A549 (cell line): ENCODE measurements at regions of chr15 and their contacts with region 1.

Region 1: GRCh38 chr15:91271565-91272153 is 171.6 kb downstream of the SV2B start:
- DNase-seq: peak; percentile 51 to 76
- ATAC-seq: peak; percentile 86 to 90; a peak in 5 of 6 replicates
- H3K4me3 ChIP-seq: no peak overlapping the region
- H3K27ac ChIP-seq: no peak overlapping the region
- H3K4me1 ChIP-seq: no peaks in the 10 kb centered on the region
- CTCF ChIP-seq: peak; percentile 97
- EP300 ChIP-seq: no peak
- POLR2A ChIP-seq: no peak
- RAD21 ChIP-seq: peak; percentile 95 to 96

Region 2: GRCh38 chr15:90902040-90902839 is 369.4 kb before region 1 on chr15:
- CTCF ChIA-PET with region 1: interaction called, 11 read pairs
- POLR2A ChIA-PET with region 1: interaction called, 3 read pairs
- DNase-seq: peak; percentile 88 to 99
- ATAC-seq: peak; percentile 88 to 94
- H3K4me3 ChIP-seq: peak overlapping the region; percentile 81
- H3K27ac ChIP-seq: peak overlapping the region; percentile 88
- H3K4me1 ChIP-seq: peaks cover 14% of the 10 kb centered on the region
- CTCF ChIP-seq: peak; percentile 90
- EP300 ChIP-seq: no peak
- POLR2A ChIP-seq: peak; percentile 91
- RAD21 ChIP-seq: peak; percentile 25 to 59; a peak in 4 of 5 replicates

Region 3: DNA sequence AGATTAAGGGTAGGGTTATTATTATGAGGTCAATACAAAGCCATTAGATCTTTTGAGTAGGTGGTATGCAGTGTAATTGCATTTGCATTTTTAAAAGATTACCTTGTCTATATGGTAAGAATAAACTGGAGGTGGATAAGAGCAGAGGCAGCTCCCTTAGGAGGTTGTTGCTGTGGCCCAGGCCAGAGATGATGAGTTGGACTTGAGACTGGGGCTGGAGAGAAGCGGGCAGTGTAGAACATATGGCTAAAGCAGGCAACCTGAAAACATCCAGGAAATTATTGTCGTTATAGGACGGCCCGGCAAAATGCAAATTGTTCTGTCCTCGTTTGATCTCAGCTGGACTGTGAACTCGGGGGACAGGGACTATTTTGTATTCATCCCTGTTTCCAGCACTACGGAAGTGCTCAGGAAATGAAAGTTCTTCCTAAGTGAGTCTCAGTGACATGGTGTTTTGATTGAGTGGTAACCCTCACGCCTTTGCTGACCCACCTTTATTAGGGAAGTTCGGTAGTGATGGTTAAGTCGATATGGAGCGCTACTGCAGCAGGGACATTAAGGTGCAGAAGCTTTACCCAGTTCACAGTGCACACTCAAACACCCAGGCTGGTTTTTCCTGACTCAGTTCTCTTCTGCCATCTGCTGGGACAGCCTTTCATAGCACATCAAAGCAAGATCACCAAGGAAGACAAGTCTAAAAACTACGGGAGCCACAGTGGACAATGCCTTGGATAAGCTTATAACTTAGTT is 222.1 kb before region 1 on chr15:
- CTCF ChIA-PET with region 1: interaction called, 156 read pairs
- POLR2A ChIA-PET with region 1: no interaction called
- DNase-seq: peak; percentile 63 to 81
- ATAC-seq: peak; percentile 95 to 96
- H3K4me3 ChIP-seq: no peak overlapping the region
- H3K27ac ChIP-seq: no peak overlapping the region
- H3K4me1 ChIP-seq: no peaks in the 10 kb centered on the region
- CTCF ChIP-seq: peak; percentile 83
- EP300 ChIP-seq: no peak
- POLR2A ChIP-seq: no peak
- RAD21 ChIP-seq: peak; percentile 83 to 86

Region 4: DNA sequence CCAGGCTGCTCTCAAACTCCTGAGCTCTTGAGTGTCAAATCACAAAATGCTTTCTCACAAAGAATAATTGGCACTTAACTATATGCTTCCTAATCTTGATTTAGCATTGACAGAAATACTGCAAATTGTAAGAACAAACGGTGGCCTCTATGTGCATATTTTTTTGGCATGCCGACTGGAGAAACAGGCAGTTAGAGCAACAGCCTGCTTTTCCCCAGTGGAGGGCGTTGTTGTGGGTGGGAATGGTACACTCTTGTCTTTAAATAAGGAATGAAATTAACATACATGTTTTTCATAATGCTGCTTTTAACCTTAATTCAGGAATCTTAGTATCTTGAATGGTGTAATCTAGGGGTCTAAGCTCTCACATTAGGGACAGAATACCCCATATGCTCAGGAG is 202.7 kb before region 1 on chr15:
- CTCF ChIA-PET with region 1: interaction called, 11 read pairs
- POLR2A ChIA-PET with region 1: no interaction called
- DNase-seq: no peak
- ATAC-seq: no peak
- H3K4me3 ChIP-seq: no peak overlapping the region
- H3K27ac ChIP-seq: no peak overlapping the region
- H3K4me1 ChIP-seq: no peaks in the 10 kb centered on the region
- CTCF ChIP-seq: no peak
- EP300 ChIP-seq: no peak
- POLR2A ChIP-seq: no peak
- RAD21 ChIP-seq: no peak

Region 5: GRCh38 chr15:91116113-91117067 is 155.3 kb before region 1 on chr15:
- CTCF ChIA-PET with region 1: no interaction called
- POLR2A ChIA-PET with region 1: no interaction called
- DNase-seq: no peak
- ATAC-seq: no peak
- H3K4me3 ChIP-seq: no peak overlapping the region
- H3K27ac ChIP-seq: no peak overlapping the region
- H3K4me1 ChIP-seq: no peaks in the 10 kb centered on the region
- CTCF ChIP-seq: no peak
- EP300 ChIP-seq: no peak
- POLR2A ChIP-seq: no peak
- RAD21 ChIP-seq: no peak

Region 6: GRCh38 chr15:91246998-91247397 is 24.7 kb before region 1 on chr15:
- CTCF ChIA-PET with region 1: interaction called, 14 read pairs
- POLR2A ChIA-PET with region 1: no interaction called
- DNase-seq: no peak
- ATAC-seq: no peak
- H3K4me3 ChIP-seq: no peak overlapping the region
- H3K27ac ChIP-seq: no peak overlapping the region
- H3K4me1 ChIP-seq: no peaks in the 10 kb centered on the region
- CTCF ChIP-seq: no peak
- EP300 ChIP-seq: no peak
- POLR2A ChIP-seq: no peak
- RAD21 ChIP-seq: no peak

Region 7: GRCh38 chr15:91258425-91258779 is 13.3 kb before region 1 on chr15:
- CTCF ChIA-PET with region 1: interaction called, 29 read pairs
- POLR2A ChIA-PET with region 1: no interaction called
- DNase-seq: peak; percentile 16 to 28
- ATAC-seq: peak; percentile 68 to 79; a peak in 5 of 6 replicates
- H3K4me3 ChIP-seq: no peak overlapping the region
- H3K27ac ChIP-seq: no peak overlapping the region
- H3K4me1 ChIP-seq: no peaks in the 10 kb centered on the region
- CTCF ChIP-seq: no peak
- EP300 ChIP-seq: no peak
- POLR2A ChIP-seq: no peak
- RAD21 ChIP-seq: no peak

Region 8: GRCh38 chr15:91302588-91303439 is 31.2 kb after region 1 on chr15:
- CTCF ChIA-PET with region 1: interaction called, 12 read pairs
- POLR2A ChIA-PET with region 1: no interaction called
- DNase-seq: peak; percentile 71 to 80
- ATAC-seq: peak; percentile 75 to 95; a peak in 5 of 6 replicates
- H3K4me3 ChIP-seq: no peak overlapping the region
- H3K27ac ChIP-seq: no peak overlapping the region
- H3K4me1 ChIP-seq: no peaks in the 10 kb centered on the region
- CTCF ChIP-seq: peak; percentile 94
- EP300 ChIP-seq: no peak
- POLR2A ChIP-seq: no peak
- RAD21 ChIP-seq: peak; percentile 95 to 96